ENCODE measurements at regions of chr7 and their contacts with region 1.

Region 1: GRCh38 chr7:104983578-104984539 is 30.1 kb upstream of the KMT2E start:
- DNase-seq: peak; percentile 92
- ATAC-seq: peak; percentile 93
- H3K4me3 Mint-ChIP-seq: peak overlapping the region; percentile 99
- H3K27ac Mint-ChIP-seq: peak overlapping the region; percentile 100
- H3K4me1 Mint-ChIP-seq: peaks cover 71% of the 10 kb centered on the region
- H3K27me3 Mint-ChIP-seq: no peaks in the 10 kb centered on the region

Region 2: GRCh38 chr7:104857458-104858425 is 126.1 kb before region 1 on chr7:
- CTCF ChIA-PET with region 1: no interaction called
- DNase-seq: no peak
- ATAC-seq: peak; percentile 58
- H3K4me3 Mint-ChIP-seq: peak overlapping the region; percentile 2
- H3K27ac Mint-ChIP-seq: peak overlapping the region; percentile 18
- H3K4me1 Mint-ChIP-seq: peaks cover 16% of the 10 kb centered on the region
- H3K27me3 Mint-ChIP-seq: peaks cover 13% of the 10 kb centered on the region

Region 3: GRCh38 chr7:104931181-104931781 is 52.6 kb before region 1 on chr7:
- CTCF ChIA-PET with region 1: interaction called, 12 read pairs
- DNase-seq: no peak
- ATAC-seq: no peak
- H3K4me3 Mint-ChIP-seq: no peak overlapping the region
- H3K27ac Mint-ChIP-seq: no peak overlapping the region
- H3K4me1 Mint-ChIP-seq: no peaks in the 10 kb centered on the region
- H3K27me3 Mint-ChIP-seq: no peaks in the 10 kb centered on the region

Region 4: DNA sequence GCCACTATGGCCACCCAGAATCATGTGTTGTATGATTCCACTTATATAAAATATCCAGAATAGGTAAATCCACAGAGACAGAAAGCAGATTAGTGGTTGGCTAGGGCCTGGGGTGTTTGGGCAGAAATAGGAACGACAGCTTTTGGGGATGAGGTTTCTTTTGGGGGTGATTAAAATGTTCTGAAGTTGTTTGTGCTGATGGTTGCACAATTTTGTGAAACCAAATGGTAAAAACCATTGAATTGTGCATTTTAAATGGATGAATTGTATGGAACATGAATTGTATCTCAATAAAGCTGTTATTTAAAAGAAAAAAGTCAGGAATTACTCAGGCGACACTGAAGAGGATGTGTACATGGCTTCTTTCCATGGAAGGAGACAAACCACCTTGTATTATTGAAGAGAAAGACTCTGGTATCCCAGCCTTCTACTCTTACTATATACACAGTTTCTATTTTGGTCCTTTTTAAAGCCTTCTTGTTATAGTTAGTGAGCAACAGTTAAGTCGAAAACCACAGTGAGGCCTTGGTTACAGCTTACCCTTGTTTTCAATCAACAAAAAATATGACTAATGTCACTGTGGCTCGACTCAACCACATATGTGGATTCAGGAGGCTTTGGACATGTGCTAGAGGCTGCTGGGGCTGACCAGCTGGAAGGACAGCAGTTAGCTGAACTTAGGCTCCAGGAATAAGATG is 27.0 kb before region 1 on chr7:
- CTCF ChIA-PET with region 1: interaction called, 10 read pairs
- DNase-seq: peak; percentile 83
- ATAC-seq: peak; percentile 88
- H3K4me3 Mint-ChIP-seq: peak overlapping the region; percentile 43
- H3K27ac Mint-ChIP-seq: peak overlapping the region; percentile 98
- H3K4me1 Mint-ChIP-seq: peaks cover 66% of the 10 kb centered on the region
- H3K27me3 Mint-ChIP-seq: no peaks in the 10 kb centered on the region

Region 5: GRCh38 chr7:104967595-104967994 is 16.3 kb before region 1 on chr7:
- CTCF ChIA-PET with region 1: interaction called, 16 read pairs
- DNase-seq: no peak
- ATAC-seq: no peak
- H3K4me3 Mint-ChIP-seq: no peak overlapping the region
- H3K27ac Mint-ChIP-seq: no peak overlapping the region
- H3K4me1 Mint-ChIP-seq: peaks cover 14% of the 10 kb centered on the region
- H3K27me3 Mint-ChIP-seq: no peaks in the 10 kb centered on the region

Region 6: GRCh38 chr7:105013221-105013815 is 29.5 kb after region 1 on chr7:
- CTCF ChIA-PET with region 1: interaction called, 58 read pairs
- DNase-seq: peak; percentile 97
- ATAC-seq: peak; percentile 60
- H3K4me3 Mint-ChIP-seq: peak overlapping the region; percentile 100
- H3K27ac Mint-ChIP-seq: peak overlapping the region; percentile 100
- H3K4me1 Mint-ChIP-seq: peaks cover 34% of the 10 kb centered on the region
- H3K27me3 Mint-ChIP-seq: peaks cover 5% of the 10 kb centered on the region